WTC11 (cell line): ENCODE measurements at regions of chr12 and their contacts with region 1.

Region 1: DNA sequence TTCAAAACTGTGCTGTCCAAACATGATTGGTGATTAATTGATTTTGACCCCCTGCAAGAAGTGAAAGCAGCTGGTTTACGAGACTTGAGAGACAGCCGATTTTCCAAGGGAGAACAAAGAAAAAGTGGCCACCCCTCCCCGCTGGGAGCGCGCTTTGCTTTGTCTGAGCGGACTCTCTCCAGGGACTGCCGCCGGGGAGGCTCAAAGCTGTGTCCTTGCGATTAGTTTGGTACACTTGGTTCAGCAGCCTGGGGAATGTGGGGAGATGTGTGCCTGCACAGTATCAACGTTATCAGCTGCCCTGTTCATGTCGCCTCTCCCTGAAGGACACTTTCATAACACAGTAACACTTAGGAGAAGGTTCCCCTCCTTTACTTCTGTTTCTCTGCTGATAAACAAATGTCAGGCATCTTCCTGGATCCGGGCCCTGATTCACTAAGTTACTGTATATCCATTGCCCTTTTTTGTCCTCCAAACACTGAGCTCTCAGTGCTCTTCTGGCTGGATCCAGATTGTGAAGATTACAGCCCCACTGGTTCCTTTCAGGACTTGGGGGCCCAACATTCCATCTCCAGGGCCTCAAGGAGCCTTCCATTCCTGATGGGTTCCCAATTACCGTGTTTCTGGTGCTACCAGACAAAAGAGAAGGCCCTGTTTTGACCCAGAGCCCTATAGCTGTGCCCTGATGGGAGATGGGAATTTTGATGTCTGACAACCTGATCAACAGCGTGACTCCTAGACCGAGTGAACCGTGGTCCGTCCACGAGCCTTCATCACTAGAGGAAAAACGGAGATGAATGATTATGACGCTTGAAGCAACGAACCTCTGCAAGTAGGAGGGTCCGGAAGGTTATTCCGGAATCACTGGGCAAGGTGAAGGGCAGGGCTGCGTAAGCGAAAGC is 31.7 kb upstream of the TUBA1C start:
- DNase-seq: peak; percentile 62
- ATAC-seq: peak; percentile 34
- H3K4me3 Mint-ChIP-seq: peak overlapping the region; percentile 38
- H3K27ac Mint-ChIP-seq: no peak overlapping the region
- H3K4me1 Mint-ChIP-seq: peaks cover 27% of the 10 kb centered on the region
- H3K27me3 Mint-ChIP-seq: peaks cover 6% of the 10 kb centered on the region; the same call in 1 of the 2 replicates
- CTCF ChIP-seq: no peak

Region 2: DNA sequence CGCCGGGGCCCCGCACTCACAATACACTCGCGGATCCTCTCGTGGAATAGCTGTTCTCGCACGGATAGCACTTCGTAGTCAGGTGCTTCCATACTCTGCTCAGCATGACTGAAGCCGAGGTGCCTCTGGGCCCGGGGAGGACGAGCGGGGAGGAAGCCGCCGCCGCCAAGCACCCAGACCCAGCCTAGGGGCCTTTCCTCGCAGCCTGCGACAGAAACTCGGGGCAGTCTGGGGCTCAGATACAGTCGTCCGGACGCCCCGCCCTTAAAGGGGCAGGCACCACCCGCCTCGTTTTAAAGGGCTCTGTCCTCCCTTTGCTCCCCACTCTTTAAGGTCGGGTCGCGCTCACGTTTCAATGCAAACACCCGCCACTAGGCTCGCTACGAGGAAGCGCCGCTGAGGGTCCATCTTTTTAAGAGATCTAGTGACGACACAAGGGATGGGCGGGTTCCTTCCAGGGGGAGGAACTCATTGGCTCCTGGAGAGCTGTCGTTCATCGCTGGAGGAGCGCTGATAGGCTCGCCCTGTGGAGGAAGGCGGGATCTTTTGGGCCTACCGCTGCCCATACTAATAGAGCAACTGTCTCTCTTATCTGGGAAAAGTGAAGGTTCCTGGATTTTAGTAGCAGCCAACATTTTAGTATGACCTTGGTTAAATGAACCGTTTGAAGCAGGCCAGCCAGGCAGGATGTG is 122.6 kb before region 1 on chr12 and contains the start of gene LMBR1L:
- CTCF ChIA-PET with region 1: interaction called, 13 read pairs
- POLR2A ChIA-PET with region 1: no interaction called
- DNase-seq: peak; percentile 97
- ATAC-seq: peak; percentile 96
- H3K4me3 Mint-ChIP-seq: peak within 1 kb of the TSS; percentile 96
- H3K27ac Mint-ChIP-seq: peak within 1 kb of the TSS; percentile 98
- H3K4me1 Mint-ChIP-seq: peaks cover 29% of the 10 kb centered on the region
- H3K27me3 Mint-ChIP-seq: peaks cover 4% of the 10 kb centered on the region
- CTCF ChIP-seq: no peak
- total RNA-seq, gene LMBR1L: 52.8 to 78.2 TPM (median 53.1 TPM) in 3 replicates

Region 3: DNA sequence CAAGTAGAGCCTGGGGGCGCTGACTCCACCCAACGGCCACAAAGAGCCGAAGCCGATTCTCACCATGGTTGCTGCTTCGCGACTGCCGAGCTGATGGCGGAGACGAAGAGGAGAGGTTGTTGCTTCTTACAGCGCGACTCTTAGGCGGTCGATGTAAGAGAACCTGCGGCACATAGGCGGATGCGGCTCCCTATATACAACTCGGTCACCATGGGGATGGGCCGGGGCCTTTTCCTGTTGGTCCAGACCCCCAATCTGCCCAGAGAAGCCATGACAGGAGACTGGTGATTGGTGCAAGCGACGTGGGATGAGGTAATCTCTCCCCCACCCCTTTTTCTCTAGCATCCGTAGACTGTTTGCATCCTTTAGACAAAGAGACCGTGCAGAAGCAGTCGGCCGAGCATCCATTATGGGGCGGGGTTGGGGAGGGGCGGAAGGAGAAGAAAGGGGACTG is 44.2 kb before region 1 on chr12 and contains the start of gene TUBA1A:
- CTCF ChIA-PET with region 1: interaction called, 5 read pairs
- POLR2A ChIA-PET with region 1: interaction called, 12 read pairs
- DNase-seq: peak; percentile 95
- ATAC-seq: peak; percentile 98
- H3K4me3 Mint-ChIP-seq: peak within 1 kb of the TSS; percentile 93
- H3K27ac Mint-ChIP-seq: peak within 1 kb of the TSS; percentile 98
- H3K4me1 Mint-ChIP-seq: peaks cover 11% of the 10 kb centered on the region
- H3K27me3 Mint-ChIP-seq: no peaks in the 10 kb centered on the region
- CTCF ChIP-seq: no peak
- total RNA-seq, gene TUBA1A: 195 to 226 TPM (median 203 TPM) in 3 replicates